ENCODE measurements at regions of chr3 and their contacts with region 1.

Region 1: GRCh38 chr3:62261121-62261520 is 112.2 kb downstream of the FEZF2 start:
- DNase-seq: no peak
- H3K4me3 ChIP-seq: no peak overlapping the region
- H3K27ac ChIP-seq: no peak overlapping the region
- H3K4me1 ChIP-seq: no peaks in the 10 kb centered on the region
- H3K27me3 ChIP-seq: no peaks in the 10 kb centered on the region
- CTCF ChIP-seq: no peak
- EP300 ChIP-seq: no peak
- POLR2A ChIP-seq: no peak

Region 2: GRCh38 chr3:60781935-60782334 is 1479.2 kb before region 1 on chr3:
- in situ Hi-C with region 1: no loop called
- intact Hi-C with region 1: loop called (anchors 5 kb)
- DNase-seq: no peak
- H3K4me3 ChIP-seq: no peak overlapping the region
- H3K27ac ChIP-seq: no peak overlapping the region
- H3K4me1 ChIP-seq: no peaks in the 10 kb centered on the region
- H3K27me3 ChIP-seq: no peaks in the 10 kb centered on the region
- CTCF ChIP-seq: no peak
- EP300 ChIP-seq: no peak
- POLR2A ChIP-seq: no peak

Measured in transverse colon (tissue), 4 donors.